Activated CD4-positive, alpha-beta T cell treated with anti-CD3 and anti-CD28 coated beads, Interleukin-2, amount 10 ng/mL, durations not matched to agents 24 days and 14 days (primary cell): ENCODE measurements at regions of chr11 and their contacts with region 1.

Region 1: DNA sequence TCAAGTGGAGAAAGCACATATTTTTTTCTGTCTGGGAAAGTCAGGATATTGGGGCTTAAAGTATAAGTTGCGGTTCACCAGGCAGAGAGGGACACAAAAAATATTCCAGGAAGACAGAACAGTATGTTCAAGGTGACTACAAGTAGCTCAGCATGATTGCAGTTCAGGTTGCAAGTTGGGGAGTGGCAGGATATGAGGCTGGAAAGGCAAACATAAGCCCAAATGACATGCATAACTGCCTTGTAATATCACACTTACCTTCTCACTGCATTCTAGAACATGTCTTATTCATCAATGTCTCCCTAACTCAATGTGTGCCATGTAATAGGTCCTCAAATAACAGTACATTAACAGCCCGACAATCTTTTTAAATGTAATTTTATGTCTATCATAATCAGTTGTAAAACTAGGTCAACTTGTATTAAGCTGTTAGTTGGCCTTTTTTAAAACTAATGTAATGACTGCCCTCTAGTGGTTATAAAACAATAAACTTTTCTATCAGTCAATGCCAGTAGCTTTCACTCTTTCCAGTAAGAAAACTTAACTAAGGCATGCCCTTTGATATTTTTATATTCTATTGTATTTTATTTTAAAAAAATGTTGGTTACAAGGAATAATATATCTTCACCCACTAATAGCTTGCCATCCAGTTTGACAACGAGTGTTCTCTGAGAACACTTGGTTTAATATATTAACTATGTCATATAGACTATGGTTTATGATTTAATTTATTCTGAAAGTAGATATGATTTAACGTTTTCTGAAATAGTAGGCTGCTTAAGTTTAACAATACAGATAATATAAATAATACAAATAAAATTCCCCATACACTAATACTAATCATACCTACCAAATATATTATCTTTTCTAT is 39.4 kb upstream of the CFAP300 start:
- DNase-seq: peak; percentile 49
- H3K4me3 Mint-ChIP-seq: no peak overlapping the region
- H3K27ac Mint-ChIP-seq: no peak overlapping the region
- H3K4me1 Mint-ChIP-seq: peaks cover 6% of the 10 kb centered on the region
- H3K27me3 Mint-ChIP-seq: peaks cover 11% of the 10 kb centered on the region

Region 2: DNA sequence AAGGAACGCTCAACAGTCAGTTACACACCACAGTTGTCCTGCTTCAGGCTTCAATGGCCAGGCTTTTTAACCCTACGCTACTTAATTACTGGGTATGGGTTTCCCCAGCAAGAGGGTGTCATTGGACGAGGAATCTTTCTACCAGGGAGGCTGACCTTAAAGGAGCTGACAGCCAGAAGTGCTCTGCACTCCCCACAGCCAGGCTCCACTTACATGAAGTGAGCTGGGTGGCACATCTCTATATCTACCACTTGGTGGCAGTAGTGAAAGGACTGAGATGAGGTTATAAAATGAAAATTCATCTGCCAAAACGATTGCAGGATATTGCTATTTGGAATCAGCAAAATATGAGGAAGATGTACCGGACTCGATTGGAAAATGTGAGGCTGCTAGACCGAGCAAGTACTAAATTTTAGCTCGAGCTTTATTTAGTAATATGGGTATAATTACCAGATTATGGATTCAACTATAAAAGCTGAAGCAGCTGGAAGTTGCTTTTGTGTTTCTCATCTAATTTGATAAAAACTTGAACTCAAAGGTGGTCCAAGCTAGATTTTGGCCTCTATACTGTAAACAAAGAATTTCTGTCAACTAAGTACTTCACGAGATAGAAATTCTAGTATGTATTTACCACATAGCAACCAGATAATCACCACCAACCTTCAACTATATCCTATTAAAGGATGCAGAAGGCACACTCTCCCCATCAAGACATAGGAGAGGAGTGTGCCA is 146.9 kb before region 1 on chr11:
- intact Hi-C with region 1: loop called (anchors 1 kb)
- DNase-seq: peak; percentile 71
- H3K4me3 Mint-ChIP-seq: no peak overlapping the region
- H3K27ac Mint-ChIP-seq: no peak overlapping the region
- H3K4me1 Mint-ChIP-seq: no peaks in the 10 kb centered on the region
- H3K27me3 Mint-ChIP-seq: no peaks in the 10 kb centered on the region

Region 3: DNA sequence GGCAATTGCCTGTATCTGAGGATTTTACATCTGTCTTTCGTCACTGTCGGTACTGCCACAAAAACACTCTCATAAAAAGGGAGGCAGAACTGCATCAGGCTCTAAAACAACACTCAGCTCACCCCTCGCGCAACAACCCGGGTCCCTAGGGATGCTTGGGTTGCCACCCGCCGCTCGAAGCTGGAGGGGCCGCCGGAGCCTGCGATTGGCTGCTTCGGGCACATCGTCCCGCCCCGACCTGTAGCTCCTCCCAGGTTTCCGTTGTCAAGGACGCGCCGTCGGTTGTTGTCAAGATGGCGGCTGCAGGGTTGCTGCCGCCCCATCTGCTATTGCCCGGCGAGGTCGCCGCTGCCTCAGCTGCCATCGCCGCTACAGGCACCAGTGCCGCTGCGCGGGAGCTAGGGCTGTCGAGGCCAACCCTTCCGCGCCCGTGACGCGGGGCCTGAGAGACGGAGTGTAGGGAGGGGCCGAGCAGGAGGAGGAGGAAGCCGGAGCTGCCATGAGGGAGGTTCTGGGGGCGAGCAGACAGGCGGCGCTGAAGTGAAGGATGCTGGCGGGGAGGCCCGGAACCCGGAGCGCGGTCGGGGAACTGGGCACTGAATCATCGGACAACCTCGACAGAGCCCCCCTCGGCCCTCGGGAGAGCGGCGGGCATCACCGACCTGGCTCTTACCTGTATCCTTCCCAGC is 92.9 kb before region 1 on chr11 and contains the start of gene CEP126:
- intact Hi-C with region 1: loop called (anchors 5 kb)
- DNase-seq: peak; percentile 98
- H3K4me3 Mint-ChIP-seq: peak within 1 kb of the TSS; percentile 91
- H3K27ac Mint-ChIP-seq: peak within 1 kb of the TSS; percentile 86
- H3K4me1 Mint-ChIP-seq: peaks cover 10% of the 10 kb centered on the region
- H3K27me3 Mint-ChIP-seq: no peaks in the 10 kb centered on the region
- total RNA-seq, gene CEP126: 0.72 and 0.90 TPM in 2 replicates